ENCODE measurements at regions of chr9 and their contacts with region 1.

Region 1: DNA sequence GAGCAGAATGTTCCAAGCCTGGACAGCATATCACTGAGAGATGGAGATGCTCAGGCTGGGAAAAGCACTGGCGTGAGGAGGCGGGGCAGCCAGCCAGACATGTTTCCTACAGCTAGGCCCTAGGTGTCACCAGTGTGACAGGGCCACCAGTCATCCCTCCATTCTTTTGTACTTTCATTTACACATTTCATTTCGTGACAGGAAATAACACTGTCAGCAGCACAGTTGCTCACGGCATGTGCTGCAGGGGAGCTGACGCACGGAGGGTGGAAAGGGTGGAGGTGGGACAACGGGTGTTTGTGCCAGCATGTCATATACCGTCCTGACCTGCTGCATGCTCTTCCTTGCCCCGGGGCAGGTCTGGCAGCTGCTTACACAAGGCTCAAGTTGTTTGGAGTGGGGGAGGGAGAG is 14.8 kb upstream of the CEMIP2 start:
- DNase-seq: peak; percentile 64 to 93 (median 87)
- ATAC-seq: peak; percentile 95
- H3K4me3 Mint-ChIP-seq: peak overlapping the region; percentile 62 to 80 (median 78)
- H3K27ac Mint-ChIP-seq: peak overlapping the region; percentile 95 to 100 (median 99)
- H3K4me1 Mint-ChIP-seq: peaks cover 26 to 54% (median 53%) of the 10 kb centered on the region in 4 donors
- H3K27me3 Mint-ChIP-seq: no peaks in the 10 kb centered on the region

Region 2: DNA sequence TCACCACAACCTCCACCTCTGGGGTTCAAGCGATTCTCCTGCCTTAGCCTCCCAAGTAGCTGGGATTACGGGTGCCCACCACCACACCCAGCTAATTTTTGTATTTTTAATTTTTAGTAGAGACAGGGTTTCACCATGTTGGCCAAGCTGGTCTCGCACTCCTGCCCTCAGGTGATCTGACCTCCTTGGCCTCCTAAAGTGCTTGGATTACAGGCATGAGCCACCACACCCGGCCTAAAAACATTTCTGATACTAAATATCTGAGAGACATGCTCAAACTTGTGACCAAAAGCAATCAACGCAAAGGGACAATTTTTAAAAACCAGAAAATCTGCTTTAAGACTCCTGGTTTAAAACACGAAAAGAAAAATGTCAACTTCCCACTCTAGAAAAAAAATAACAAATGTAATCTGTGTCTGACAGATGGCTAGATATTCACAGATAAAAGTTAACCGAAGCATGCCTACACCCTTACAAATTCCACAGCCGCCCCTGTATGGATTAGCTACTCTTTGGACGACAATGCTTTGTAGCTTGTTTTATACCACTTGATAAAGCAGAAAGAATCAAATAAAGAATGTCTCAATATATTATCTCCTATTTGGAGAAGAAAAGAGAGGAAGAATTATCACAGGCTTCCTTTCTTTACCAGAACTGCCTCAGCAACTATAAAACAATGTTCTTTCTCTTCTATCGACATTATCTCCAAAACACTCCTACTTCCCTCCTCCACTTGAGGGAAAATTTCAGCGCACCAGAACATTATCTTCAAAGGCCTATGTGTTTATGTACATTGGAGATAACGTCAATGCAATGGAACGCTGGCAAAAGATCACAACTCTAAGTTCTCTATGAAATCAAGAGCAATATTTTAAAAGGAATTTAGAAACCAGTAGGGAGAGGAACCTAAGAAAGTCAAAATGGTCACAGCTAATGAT is 41.1 kb before region 1 on chr9:
- POLR2A ChIA-PET with region 1: no interaction called
- DNase-seq: no peak
- ATAC-seq: no peak
- H3K4me3 Mint-ChIP-seq: peak overlapping the region in 1 of 10 donors; percentile 10
- H3K27ac Mint-ChIP-seq: peak overlapping the region in 2 of 10 donors; percentile 67 to 71
- H3K4me1 Mint-ChIP-seq: peaks cover 8 to 23% (median 15%) of the 10 kb centered on the region in 4 donors
- H3K27me3 Mint-ChIP-seq: no peaks in the 10 kb centered on the region

Region 3: GRCh38 chr9:71795097-71795813 is 12.1 kb after region 1 on chr9:
- POLR2A ChIA-PET with region 1: interaction called, 81 read pairs
- DNase-seq: peak in 6 of 10 donors; percentile 15 to 84 (median 64)
- ATAC-seq: peak; percentile 89 to 92
- H3K4me3 Mint-ChIP-seq: peak overlapping the region; percentile 34 to 78 (median 74)
- H3K27ac Mint-ChIP-seq: peak overlapping the region; percentile 93 to 99 (median 98)
- H3K4me1 Mint-ChIP-seq: peaks cover 35 to 72% (median 71%) of the 10 kb centered on the region in 4 donors
- H3K27me3 Mint-ChIP-seq: no peaks in the 10 kb centered on the region